Activated CD4-positive, alpha-beta T cell treated with anti-CD3 and anti-CD28 coated beads, Interleukin-2, amount 10 ng/mL, durations not matched to agents 24 days and 14 days (primary cell): ENCODE measurements at regions of chr1 and their contacts with region 1.

Region 1: DNA sequence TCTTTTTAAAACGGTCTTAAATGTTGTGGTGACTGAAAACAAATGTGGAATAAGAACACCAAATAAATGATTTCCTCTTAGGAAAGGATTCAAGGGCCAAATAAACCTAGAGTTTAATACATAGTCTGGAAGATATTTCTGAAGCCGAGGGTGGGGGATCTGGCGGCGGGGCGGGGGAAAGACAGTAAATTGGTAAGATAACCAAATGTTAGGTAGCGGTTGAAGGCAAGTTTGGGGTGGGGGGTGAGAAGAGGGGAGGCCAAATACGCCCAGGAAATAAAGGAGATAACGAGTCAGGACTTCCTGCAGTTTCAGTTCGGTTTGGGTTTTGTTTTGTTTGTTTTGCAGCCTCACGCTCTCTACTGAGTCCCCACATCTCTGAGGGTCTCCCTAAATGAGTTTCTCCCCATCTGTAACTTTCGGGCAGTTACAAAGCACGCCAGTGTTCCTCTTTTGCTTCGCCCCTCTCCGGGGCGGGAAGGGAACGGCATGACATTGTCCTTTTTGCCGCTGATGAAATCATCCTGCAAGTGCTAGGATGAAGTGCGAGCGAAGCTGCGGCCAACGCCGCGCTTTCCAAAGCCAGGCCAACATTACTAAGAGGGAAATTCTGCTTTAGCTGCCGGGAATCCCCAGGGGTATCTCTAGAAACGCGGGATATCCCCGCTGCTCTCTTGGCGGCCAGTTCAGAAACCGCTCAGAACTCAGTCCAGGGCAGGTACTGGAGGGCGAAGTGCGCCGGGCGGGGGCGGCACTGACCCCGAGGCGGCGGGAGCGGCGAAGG is 844 bp downstream of the NIBAN1 start:
- DNase-seq: no peak
- H3K4me3 Mint-ChIP-seq: peak overlapping the region; percentile 91
- H3K27ac Mint-ChIP-seq: peak overlapping the region; percentile 94
- H3K4me1 Mint-ChIP-seq: peaks cover 56% of the 10 kb centered on the region
- H3K27me3 Mint-ChIP-seq: peaks cover 19% of the 10 kb centered on the region

Region 2: DNA sequence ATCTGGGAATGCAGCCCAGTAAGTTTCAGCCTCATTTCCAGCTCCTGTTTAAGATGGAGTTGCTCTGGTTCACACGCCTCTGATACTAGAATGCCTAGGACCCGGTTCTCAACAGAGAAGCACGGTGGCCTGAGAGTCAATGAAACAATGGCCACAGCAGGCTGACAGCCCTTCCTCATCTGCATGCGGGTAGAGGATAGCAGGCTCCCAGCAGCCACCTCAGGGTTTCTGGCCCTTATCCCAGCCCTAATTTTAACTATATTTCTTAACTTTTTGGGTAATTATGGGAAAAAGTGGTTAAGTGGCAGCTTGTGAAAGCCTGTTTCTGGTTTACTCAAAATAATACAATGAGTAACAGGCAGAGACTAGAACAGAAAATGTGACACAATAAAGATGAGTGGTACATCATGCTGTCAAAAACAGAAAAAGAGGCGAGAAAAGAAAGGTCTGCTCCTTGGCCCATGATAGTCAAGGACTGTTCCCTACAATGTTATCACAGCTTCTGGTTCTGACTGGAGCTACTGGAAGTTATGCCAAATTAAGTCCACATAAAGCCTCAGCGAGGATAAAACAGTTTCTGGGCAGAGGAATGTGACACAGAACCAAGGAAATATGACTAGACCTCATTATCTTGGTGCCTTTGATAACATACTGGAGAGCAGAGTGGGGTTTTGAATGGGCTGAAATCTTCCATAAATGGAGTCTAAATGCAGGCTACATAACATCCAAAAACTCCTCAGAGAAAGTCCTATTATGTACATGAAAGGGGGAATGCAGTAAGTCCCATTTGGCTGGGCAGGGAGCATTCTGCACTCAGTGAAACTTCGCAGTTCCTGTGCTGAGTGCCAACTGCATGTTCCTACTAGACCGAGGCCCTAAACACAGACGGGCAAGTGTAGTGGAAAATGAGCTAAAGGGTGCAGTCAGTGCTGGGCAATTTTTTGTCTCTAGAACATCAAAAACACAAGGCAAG is 91.2 kb before region 1 on chr1:
- intact Hi-C with region 1: loop called (anchors 1 kb)
- DNase-seq: no peak
- H3K4me3 Mint-ChIP-seq: peak overlapping the region; percentile 32
- H3K27ac Mint-ChIP-seq: peak overlapping the region; percentile 90
- H3K4me1 Mint-ChIP-seq: peaks cover 22% of the 10 kb centered on the region
- H3K27me3 Mint-ChIP-seq: no peaks in the 10 kb centered on the region

Region 3: GRCh38 chr1:184892116-184892515 is 81.3 kb before region 1 on chr1:
- intact Hi-C with region 1: loop called (anchors 1 kb)
- DNase-seq: peak; percentile 58
- H3K4me3 Mint-ChIP-seq: no peak overlapping the region
- H3K27ac Mint-ChIP-seq: peak overlapping the region; percentile 61
- H3K4me1 Mint-ChIP-seq: peaks cover 29% of the 10 kb centered on the region
- H3K27me3 Mint-ChIP-seq: no peaks in the 10 kb centered on the region

Region 4: DNA sequence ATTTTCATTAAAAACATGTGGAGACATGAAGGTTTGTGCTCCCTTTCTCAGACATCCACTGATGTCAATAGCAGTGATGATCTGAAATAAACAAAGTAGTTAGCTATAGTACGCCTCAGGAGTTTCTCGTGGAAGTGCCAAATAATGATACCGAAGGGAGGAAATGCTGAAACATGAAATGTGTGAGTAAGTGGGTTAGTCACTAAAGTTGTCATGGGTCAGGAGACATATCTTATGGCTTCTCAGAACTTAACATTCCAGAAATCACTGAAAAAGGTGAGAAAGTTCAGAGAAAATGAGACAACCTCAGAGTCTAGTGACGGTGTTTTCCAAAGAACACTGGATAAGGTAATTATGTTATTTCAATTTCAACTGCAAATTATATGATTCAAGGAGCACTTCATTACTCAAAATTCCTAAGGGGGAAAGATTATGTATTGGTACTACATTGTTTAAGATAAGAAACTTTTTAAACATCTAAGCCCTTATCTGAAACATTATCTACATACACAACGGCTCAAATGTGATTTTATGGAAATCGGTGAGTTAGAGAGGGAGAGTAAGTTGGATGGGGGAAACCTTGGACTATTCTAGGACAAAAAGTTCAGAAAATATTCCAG is 19.8 kb before region 1 on chr1:
- intact Hi-C with region 1: loop called (anchors 1 kb)
- DNase-seq: no peak
- H3K4me3 Mint-ChIP-seq: peak overlapping the region; percentile 52
- H3K27ac Mint-ChIP-seq: peak overlapping the region; percentile 69
- H3K4me1 Mint-ChIP-seq: peaks cover 16% of the 10 kb centered on the region
- H3K27me3 Mint-ChIP-seq: no peaks in the 10 kb centered on the region

Region 5: GRCh38 chr1:185044981-185045813 is 71.7 kb after region 1 on chr1 and contains the start of gene RNF2:
- intact Hi-C with region 1: loop called (anchors 5 kb)
- DNase-seq: peak; percentile 91
- H3K4me3 Mint-ChIP-seq: peak within 1 kb of the TSS; percentile 93
- H3K27ac Mint-ChIP-seq: peak within 1 kb of the TSS; percentile 91
- H3K4me1 Mint-ChIP-seq: peaks cover 26% of the 10 kb centered on the region
- H3K27me3 Mint-ChIP-seq: peaks cover 18% of the 10 kb centered on the region
- total RNA-seq, gene RNF2: 17.8 and 21.1 TPM in 2 replicates